Activated B cell treated with CpG ODN at 0.5 μM for 24 hours (primary cell): ENCODE measurements at regions of chr1 and their contacts with region 1.

Region 1: GRCh38 chr1:2545759-2546514 is 10.2 kb upstream of the TNFRSF14 start:
- DNase-seq: peak; percentile 82
- ATAC-seq: peak; percentile 51
- H3K4me3 Mint-ChIP-seq: peak overlapping the region; percentile 87
- H3K27ac Mint-ChIP-seq: peak overlapping the region; percentile 50
- H3K4me1 Mint-ChIP-seq: peaks cover 40% of the 10 kb centered on the region
- H3K27me3 Mint-ChIP-seq: peaks cover 6% of the 10 kb centered on the region
- CTCF ChIP-seq: no peak

Region 2: GRCh38 chr1:2205191-2205952 is 340.6 kb before region 1 on chr1:
- CTCF ChIA-PET with region 1: no interaction called
- POLR2A ChIA-PET with region 1: interaction called, 6 read pairs
- intact Hi-C with region 1: loop called (anchors 2 kb)
- DNase-seq: peak; percentile 86
- ATAC-seq: peak; percentile 93
- H3K4me3 Mint-ChIP-seq: peak overlapping the region; percentile 72
- H3K27ac Mint-ChIP-seq: no peak overlapping the region
- H3K4me1 Mint-ChIP-seq: peaks cover 29% of the 10 kb centered on the region
- H3K27me3 Mint-ChIP-seq: no peaks in the 10 kb centered on the region
- CTCF ChIP-seq: no peak

Region 3: GRCh38 chr1:2391041-2391930 is 154.7 kb before region 1 on chr1 and contains the starts of genes MORN1 and RER1:
- CTCF ChIA-PET with region 1: interaction called, 3 read pairs
- POLR2A ChIA-PET with region 1: interaction called, 30 read pairs
- intact Hi-C with region 1: loop called (anchors 1 kb)
- DNase-seq: peak; percentile 96
- ATAC-seq: peak; percentile 94
- H3K4me3 Mint-ChIP-seq: peak within 1 kb of the TSS; percentile 88
- H3K27ac Mint-ChIP-seq: peak within 1 kb of the TSS; percentile 68
- H3K4me1 Mint-ChIP-seq: peaks cover 52% of the 10 kb centered on the region
- H3K27me3 Mint-ChIP-seq: no peaks in the 10 kb centered on the region
- CTCF ChIP-seq: no peak
- total RNA-seq, gene MORN1: 15.6 and 17.8 TPM in 2 replicates
- total RNA-seq, gene RER1: 102 and 105 TPM in 2 replicates

Region 4: DNA sequence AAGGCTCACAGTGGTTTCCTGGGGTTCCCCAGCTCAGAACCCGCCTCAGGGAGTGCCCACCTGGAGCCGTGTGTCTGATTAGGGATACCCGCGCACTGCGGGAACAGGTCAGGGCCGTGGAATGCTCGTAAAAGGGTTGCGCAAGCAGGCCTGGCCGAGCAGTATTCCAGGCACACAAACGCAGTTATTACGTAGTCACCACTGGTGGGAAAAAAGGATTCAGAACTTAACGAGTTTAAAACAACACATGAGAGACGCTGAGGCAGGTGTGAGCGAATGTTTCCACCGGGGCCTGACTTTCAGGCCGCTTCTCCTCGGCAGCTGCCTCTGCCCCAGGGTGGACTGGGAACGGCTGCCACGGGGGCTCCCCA is 51.6 kb before region 1 on chr1:
- CTCF ChIA-PET with region 1: no interaction called
- POLR2A ChIA-PET with region 1: interaction called, 11 read pairs
- intact Hi-C with region 1: no loop called
- DNase-seq: no peak
- ATAC-seq: no peak
- H3K4me3 Mint-ChIP-seq: peak overlapping the region; percentile 11
- H3K27ac Mint-ChIP-seq: peak overlapping the region; percentile 68
- H3K4me1 Mint-ChIP-seq: peaks cover 53% of the 10 kb centered on the region
- H3K27me3 Mint-ChIP-seq: no peaks in the 10 kb centered on the region
- CTCF ChIP-seq: no peak

Region 5: DNA sequence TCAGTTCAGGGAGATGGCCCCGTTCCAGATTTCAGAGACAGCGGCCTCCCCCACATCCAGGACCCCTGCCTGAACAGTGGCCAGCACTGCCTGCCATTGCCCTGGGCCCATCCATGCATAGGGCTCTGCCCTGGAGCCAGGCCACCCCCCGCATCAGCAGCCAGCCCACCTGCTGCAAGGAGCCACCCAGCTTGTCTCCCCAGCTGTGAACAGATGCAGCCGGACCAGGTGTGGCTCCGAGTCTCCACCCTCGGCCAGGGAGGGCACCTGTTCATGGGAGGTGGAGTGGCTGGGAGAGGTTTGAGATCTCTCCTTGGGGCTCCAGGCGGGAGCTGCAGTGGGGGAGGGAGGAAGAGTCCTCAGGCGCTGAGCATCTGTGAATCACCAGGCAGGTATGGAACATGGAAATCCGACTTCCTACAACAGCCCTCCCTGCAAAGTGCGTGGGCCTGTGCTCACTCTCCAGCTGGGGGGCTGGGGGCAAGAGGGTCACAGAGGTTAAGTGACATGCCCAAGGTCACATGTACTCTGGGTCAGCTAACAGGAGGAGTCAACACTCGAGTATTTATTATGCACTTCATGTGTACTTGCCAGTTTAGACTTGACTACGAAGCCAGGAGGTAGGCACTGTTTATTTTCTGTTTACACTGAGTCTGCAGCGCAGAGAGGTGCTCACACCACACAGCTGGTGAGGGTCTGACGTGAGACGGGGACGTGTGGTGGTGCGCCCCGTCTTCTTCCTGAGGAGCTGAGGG is 11.1 kb before region 1 on chr1:
- CTCF ChIA-PET with region 1: interaction called, 9 read pairs
- POLR2A ChIA-PET with region 1: interaction called, 114 read pairs
- intact Hi-C with region 1: no loop called
- DNase-seq: no peak
- ATAC-seq: no peak
- H3K4me3 Mint-ChIP-seq: no peak overlapping the region
- H3K27ac Mint-ChIP-seq: no peak overlapping the region
- H3K4me1 Mint-ChIP-seq: peaks cover 3% of the 10 kb centered on the region
- H3K27me3 Mint-ChIP-seq: peaks cover 20% of the 10 kb centered on the region
- CTCF ChIP-seq: no peak

Region 6: DNA sequence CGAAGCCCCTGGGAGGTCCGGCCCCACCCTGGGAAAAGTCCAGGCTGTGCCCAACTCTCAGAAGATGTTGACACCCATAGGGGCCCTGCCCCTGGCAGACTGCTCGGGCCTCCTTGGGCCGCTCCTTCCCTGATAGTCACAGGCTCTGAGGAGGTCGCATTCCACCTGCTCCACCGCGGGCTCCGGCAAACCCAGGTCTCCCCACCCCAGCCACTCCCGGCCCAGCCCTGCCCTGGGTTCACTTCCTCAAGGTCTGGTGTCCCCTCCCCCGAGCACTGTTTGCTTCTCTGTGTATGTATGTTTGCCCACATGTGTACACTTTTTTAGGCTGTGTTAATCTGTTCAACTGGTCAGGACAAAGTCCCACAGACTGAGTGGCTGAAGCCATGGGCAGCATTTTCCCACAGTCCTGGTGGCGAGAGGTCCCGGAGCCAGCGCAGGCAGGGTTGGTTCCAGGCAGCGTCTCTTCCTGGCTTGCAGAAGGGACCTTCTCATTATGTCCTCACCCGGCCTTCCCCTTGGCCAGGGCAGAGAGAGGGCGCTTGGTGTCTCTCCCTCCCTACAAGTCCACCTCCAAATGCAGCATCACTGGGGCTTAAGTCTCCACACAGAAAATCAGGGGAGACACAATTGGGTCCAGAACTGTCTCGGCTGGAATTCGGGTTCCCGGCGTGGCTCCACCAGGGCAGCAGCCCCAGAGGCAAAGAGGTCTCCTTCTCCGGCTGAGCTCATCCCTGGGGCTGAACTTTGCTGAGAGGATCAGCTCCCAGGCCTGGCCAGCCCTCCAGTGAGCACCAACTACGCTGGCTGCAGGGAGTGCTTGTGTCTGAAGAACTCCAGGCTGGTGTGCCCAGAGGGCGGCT is 30.1 kb after region 1 on chr1:
- CTCF ChIA-PET with region 1: no interaction called
- POLR2A ChIA-PET with region 1: interaction called, 62 read pairs
- intact Hi-C with region 1: loop called (anchors 1 kb)
- DNase-seq: no peak
- ATAC-seq: no peak
- H3K4me3 Mint-ChIP-seq: peak overlapping the region; percentile 78
- H3K27ac Mint-ChIP-seq: peak overlapping the region; percentile 95
- H3K4me1 Mint-ChIP-seq: peaks cover 72% of the 10 kb centered on the region
- H3K27me3 Mint-ChIP-seq: no peaks in the 10 kb centered on the region
- CTCF ChIP-seq: no peak

Region 7: GRCh38 chr1:3423245-3423829 is 877.4 kb after region 1 on chr1:
- CTCF ChIA-PET with region 1: no interaction called
- POLR2A ChIA-PET with region 1: no interaction called
- intact Hi-C with region 1: loop called (anchors 5 kb)
- DNase-seq: no peak
- ATAC-seq: no peak
- H3K4me3 Mint-ChIP-seq: no peak overlapping the region
- H3K27ac Mint-ChIP-seq: no peak overlapping the region
- H3K4me1 Mint-ChIP-seq: no peaks in the 10 kb centered on the region
- H3K27me3 Mint-ChIP-seq: peaks cover 9% of the 10 kb centered on the region
- CTCF ChIP-seq: no peak